Heart right ventricle (tissue), 16 donors: ENCODE measurements at regions of chr5 and their contacts with region 1.

Region 1: GRCh38 chr5:138035605-138036537 is 3.0 kb upstream of the FAM13B start:
- DNase-seq: peak in 1 of 2 donors; percentile 74
- ATAC-seq: peak; percentile 8 to 66 (median 55)
- H3K4me3 ChIP-seq: no peak overlapping the region
- H3K27ac ChIP-seq: peak overlapping the region in 6 of 10 donors; percentile 9 to 51 (median 36)
- H3K4me1 ChIP-seq: peaks cover 0 to 41% (median 25%) of the 10 kb centered on the region in 9 donors
- H3K27me3 ChIP-seq: no peaks in the 10 kb centered on the region
- CTCF ChIP-seq: peak; percentile 54 to 94 (median 82)

Region 2: GRCh38 chr5:137754126-137754960 is 281.5 kb before region 1 on chr5 and contains the start of gene HNRNPA0:
- intact Hi-C with region 1: loop called in 2 of 10 experiments (anchors 5 to 10 kb)
- DNase-seq: peak; percentile 96 to 97
- ATAC-seq: peak; percentile 95 to 98 (median 96)
- H3K4me3 ChIP-seq: peak within 1 kb of the TSS; percentile 69 to 97 (median 88)
- H3K27ac ChIP-seq: peak within 1 kb of the TSS; percentile 92 to 100 (median 99)
- H3K4me1 ChIP-seq: peaks cover 4 to 39% (median 37%) of the 10 kb centered on the region in 9 donors
- H3K27me3 ChIP-seq: no peaks in the 10 kb centered on the region
- CTCF ChIP-seq: peak in 2 of 9 donors; percentile 28 to 30
- total RNA-seq, gene HNRNPA0: 12.4 to 23.8 (median 17.4) TPM

Region 3: GRCh38 chr5:138065102-138065501 is 29.2 kb after region 1 on chr5:
- intact Hi-C with region 1: loop called in 7 of 10 experiments (anchors 1 to 5 kb)
- DNase-seq: no peak
- ATAC-seq: no peak
- H3K4me3 ChIP-seq: no peak overlapping the region
- H3K27ac ChIP-seq: no peak overlapping the region
- H3K4me1 ChIP-seq: peaks cover 0 to 6% (median 0%) of the 10 kb centered on the region in 9 donors
- H3K27me3 ChIP-seq: no peaks in the 10 kb centered on the region
- CTCF ChIP-seq: peak in 7 of 9 donors; percentile 6 to 32 (median 21)

Region 4: GRCh38 chr5:138077065-138077696 is 41.3 kb after region 1 on chr5:
- intact Hi-C with region 1: loop called in 1 of 10 experiments (anchors 5 kb)
- DNase-seq: peak in 1 of 2 donors; percentile 49
- ATAC-seq: peak in 6 of 8 donors; percentile 35 to 68 (median 62)
- H3K4me3 ChIP-seq: no peak overlapping the region
- H3K27ac ChIP-seq: no peak overlapping the region
- H3K4me1 ChIP-seq: no peaks in the 10 kb centered on the region
- H3K27me3 ChIP-seq: peaks cover 0 to 6% (median 0%) of the 10 kb centered on the region in 7 donors
- CTCF ChIP-seq: peak; percentile 50 to 93 (median 85)

Region 5: DNA sequence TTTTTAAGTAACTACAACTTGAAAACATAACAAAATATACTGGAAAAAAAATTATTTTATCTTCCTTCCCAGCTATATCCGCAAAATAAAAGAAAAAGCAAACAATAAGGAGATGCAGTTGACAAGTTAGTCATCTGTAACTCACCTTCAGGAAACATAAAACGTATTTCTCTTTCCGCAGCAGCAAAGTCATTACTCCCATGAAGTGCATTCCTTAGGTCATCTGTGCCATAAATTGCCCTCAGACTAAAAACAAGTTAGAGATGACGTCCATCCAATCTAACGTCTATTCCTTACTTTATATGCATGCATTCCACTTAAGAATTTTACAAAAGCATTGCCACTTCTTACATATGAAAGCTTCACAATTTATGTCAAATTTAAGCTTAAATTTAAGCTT is 92.5 kb after region 1 on chr5:
- intact Hi-C with region 1: loop called in 4 of 10 experiments (anchors 2 to 5 kb)
- DNase-seq: no peak
- ATAC-seq: no peak
- H3K4me3 ChIP-seq: no peak overlapping the region
- H3K27ac ChIP-seq: no peak overlapping the region
- H3K4me1 ChIP-seq: peaks cover 0 to 7% (median 0%) of the 10 kb centered on the region in 9 donors
- H3K27me3 ChIP-seq: peaks cover 0 to 5% (median 0%) of the 10 kb centered on the region in 7 donors
- CTCF ChIP-seq: no peak

Region 6: GRCh38 chr5:138138949-138139780 is 103.3 kb after region 1 on chr5 and contains the start of gene NME5:
- intact Hi-C with region 1: loop called in 4 of 10 experiments (anchors 2 to 5 kb)
- DNase-seq: peak; percentile 57 to 61
- ATAC-seq: peak; percentile 82 to 95 (median 92)
- H3K4me3 ChIP-seq: peak within 1 kb of the TSS; percentile 33 to 78 (median 64)
- H3K27ac ChIP-seq: peak within 1 kb of the TSS in 1 of 10 donors; percentile 19
- H3K4me1 ChIP-seq: peaks cover 0 to 12% (median 0%) of the 10 kb centered on the region in 9 donors
- H3K27me3 ChIP-seq: peaks cover 0 to 44% (median 0%) of the 10 kb centered on the region in 7 donors
- CTCF ChIP-seq: no peak
- total RNA-seq, gene NME5: 2.0 to 5.9 (median 3.9) TPM